ENCODE measurements at regions of chr10 and their contacts with region 1.

Region 1: GRCh38 chr10:104925232-104925851 is 284.3 kb downstream of the SORCS3 start:
- DNase-seq: no peak

Region 2: DNA sequence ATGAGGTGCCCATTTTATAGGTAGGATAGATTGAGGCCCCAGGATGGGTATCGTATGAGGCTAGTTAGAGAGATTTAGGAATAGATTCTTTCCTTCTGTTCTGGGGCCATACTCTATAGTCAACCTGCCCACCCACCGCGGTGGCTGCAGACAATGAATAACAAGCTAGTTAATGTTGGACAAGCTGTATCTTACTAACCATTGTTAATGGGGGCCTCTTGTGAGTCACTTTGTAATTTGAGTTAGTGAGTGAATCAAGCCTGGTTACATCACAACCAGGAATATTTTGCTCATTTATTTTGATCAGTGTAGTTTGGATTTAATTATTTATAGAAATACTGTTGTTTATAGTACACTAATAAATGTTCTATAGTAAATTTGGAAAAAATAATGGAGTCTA is 276.9 kb before region 1 on chr10:
- intact Hi-C with region 1: loop called (anchors 5 kb)
- DNase-seq: no peak

Measured in cardiac septum (tissue), 1 donor.